ENCODE measurements at regions of chr14 and their contacts with region 1.

Region 1: GRCh38 chr14:51651388-51652167 is at the start of gene FRMD6:
- DNase-seq: peak; percentile 94
- ATAC-seq: peak; percentile 95
- total RNA-seq, gene FRMD6: 8.9 TPM

Region 2: GRCh38 chr14:51395361-51395849 is 256.2 kb before region 1 on chr14:
- intact Hi-C with region 1: loop called (anchors 10 kb)
- DNase-seq: peak; percentile 73
- ATAC-seq: peak; percentile 70

Region 3: DNA sequence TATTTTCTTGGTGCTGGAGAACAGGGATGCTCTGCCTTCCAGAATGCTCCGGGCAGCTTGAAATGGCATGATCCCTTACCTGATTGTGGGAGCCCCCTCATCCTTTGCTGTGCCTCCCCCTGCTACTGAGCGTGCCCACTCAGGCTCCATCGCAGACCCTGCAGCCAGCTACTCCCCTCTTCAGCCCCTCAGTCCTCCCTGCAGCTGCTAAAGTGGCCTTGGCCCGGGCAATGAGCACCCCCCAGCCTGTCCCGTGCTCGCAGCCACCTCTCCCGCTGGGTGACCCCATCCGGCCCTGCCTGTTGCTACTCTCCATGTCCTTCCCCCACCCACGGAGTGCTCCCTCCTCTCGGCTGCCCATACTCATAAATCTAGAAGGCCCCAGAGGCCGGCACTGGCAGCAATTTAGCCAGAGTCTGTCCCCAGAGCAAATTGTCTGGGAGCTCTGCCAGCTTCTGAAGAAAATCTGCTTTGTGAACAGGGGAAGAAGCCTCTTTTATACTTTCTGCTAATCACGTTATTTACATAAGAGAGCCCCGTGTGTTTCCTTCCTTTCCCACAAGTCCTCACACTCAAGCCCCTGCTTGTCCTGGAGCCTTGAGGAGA is 143.6 kb before region 1 on chr14:
- intact Hi-C with region 1: loop called (anchors 5 kb)
- DNase-seq: peak; percentile 82
- ATAC-seq: peak; percentile 91

Region 4: GRCh38 chr14:51780006-51780692 is 128.6 kb after region 1 on chr14:
- intact Hi-C with region 1: loop called (anchors 2 kb)
- DNase-seq: peak; percentile 75
- ATAC-seq: peak; percentile 53